ENCODE measurements at regions of chr4 and their contacts with region 1.

Region 1: DNA sequence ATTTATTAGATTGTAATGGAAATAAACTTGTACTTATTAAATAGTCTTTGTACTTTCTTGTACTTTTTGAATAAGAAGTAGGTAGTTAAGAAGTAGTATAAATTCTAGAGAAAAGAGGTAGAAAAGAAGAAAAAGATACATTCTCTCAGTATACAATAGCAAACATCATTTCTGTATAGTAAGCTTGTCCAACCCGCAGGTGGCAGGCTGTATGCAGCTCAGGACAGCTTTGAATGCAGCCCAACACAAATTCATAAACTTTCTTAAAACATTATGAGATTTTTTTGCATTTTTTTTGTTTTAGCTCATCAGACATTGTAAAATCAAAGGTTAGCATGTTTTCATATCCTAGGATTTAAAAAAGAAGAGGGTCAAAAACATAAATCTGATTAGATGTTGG is 441.6 kb downstream of the DTHD1 start:
- DNase-seq: no peak
- ATAC-seq: no peak
- H3K4me3 ChIP-seq: no peak overlapping the region
- H3K27ac ChIP-seq: no peak overlapping the region
- H3K4me1 ChIP-seq: no peaks in the 10 kb centered on the region
- H3K27me3 ChIP-seq: no peaks in the 10 kb centered on the region
- CTCF ChIP-seq: no peak

Region 2: DNA sequence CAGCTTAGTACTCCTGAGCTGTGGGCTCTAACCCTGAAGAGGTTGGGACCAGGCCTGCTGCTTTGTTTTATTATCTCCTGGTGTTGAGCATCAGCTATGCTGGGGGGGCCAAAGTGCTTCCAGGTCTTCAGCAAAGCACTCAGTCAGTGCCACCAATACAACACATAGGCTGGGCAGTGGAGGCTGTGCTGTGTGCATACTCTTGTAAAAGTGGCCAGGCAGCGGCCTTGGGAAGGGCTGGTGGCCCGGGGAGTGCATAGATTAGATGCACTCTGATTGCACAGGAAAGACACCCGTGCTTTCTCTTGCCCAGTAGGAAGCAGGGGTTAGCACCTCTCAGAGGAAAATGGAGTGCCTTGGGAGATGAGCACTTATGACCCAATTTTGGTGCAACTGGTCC is 1012.6 kb before region 1 on chr4:
- intact Hi-C with region 1: loop called in 1 of 10 experiments (anchors 5 kb)
- DNase-seq: no peak
- ATAC-seq: no peak
- H3K4me3 ChIP-seq: no peak overlapping the region
- H3K27ac ChIP-seq: no peak overlapping the region
- H3K4me1 ChIP-seq: no peaks in the 10 kb centered on the region
- H3K27me3 ChIP-seq: no peaks in the 10 kb centered on the region
- CTCF ChIP-seq: no peak

Region 3: DNA sequence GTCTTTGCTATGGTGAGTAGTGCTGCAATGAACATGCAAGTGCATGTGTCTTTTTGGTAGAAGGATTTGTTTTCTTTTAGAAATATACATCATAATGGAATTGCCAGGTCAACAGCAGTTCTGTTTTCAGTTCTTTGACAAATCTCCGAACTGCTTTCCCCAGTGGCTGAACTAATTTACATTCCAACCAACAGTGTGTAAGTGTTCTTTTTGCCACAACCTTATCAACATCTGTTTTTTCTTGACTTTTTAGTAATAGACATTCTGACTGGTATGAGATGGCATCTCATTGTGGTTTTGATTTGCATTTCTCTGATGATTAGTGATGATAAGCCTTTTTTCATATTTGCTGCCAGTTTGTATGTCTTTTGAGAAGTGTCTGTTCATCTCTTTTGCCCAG is 35.3 kb before region 1 on chr4:
- intact Hi-C with region 1: no loop called
- DNase-seq: no peak
- ATAC-seq: no peak
- H3K4me3 ChIP-seq: no peak overlapping the region
- H3K27ac ChIP-seq: no peak overlapping the region
- H3K4me1 ChIP-seq: no peaks in the 10 kb centered on the region
- H3K27me3 ChIP-seq: no peaks in the 10 kb centered on the region
- CTCF ChIP-seq: no peak

Region 4: DNA sequence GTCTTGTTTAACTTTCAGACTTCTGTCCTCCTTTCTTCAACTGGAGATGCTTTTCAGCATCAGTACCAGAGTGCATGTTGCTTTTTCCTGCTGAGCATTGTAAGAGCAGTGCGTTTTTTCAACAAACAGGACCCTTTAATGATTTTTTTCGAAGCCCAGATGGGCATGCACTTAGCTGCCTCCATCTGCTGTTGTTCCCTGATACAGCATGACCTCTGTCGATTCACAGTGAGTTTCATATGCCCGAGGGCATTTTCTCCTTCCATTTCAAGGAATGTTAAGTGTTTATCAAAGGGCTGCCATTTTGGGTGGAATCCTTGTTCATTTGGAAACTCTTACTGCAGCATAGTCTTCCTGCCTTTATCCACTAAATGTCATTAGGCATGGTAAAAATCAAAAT is 13.0 kb before region 1 on chr4:
- intact Hi-C with region 1: loop called in 1 of 10 experiments (anchors 2 kb)
- DNase-seq: no peak
- ATAC-seq: no peak
- H3K4me3 ChIP-seq: no peak overlapping the region
- H3K27ac ChIP-seq: no peak overlapping the region
- H3K4me1 ChIP-seq: no peaks in the 10 kb centered on the region
- H3K27me3 ChIP-seq: no peaks in the 10 kb centered on the region
- CTCF ChIP-seq: no peak